Dorsolateral prefrontal cortex (tissue), 120 donors: ENCODE measurements at regions of chr1 and their contacts with region 1.

Region 1: DNA sequence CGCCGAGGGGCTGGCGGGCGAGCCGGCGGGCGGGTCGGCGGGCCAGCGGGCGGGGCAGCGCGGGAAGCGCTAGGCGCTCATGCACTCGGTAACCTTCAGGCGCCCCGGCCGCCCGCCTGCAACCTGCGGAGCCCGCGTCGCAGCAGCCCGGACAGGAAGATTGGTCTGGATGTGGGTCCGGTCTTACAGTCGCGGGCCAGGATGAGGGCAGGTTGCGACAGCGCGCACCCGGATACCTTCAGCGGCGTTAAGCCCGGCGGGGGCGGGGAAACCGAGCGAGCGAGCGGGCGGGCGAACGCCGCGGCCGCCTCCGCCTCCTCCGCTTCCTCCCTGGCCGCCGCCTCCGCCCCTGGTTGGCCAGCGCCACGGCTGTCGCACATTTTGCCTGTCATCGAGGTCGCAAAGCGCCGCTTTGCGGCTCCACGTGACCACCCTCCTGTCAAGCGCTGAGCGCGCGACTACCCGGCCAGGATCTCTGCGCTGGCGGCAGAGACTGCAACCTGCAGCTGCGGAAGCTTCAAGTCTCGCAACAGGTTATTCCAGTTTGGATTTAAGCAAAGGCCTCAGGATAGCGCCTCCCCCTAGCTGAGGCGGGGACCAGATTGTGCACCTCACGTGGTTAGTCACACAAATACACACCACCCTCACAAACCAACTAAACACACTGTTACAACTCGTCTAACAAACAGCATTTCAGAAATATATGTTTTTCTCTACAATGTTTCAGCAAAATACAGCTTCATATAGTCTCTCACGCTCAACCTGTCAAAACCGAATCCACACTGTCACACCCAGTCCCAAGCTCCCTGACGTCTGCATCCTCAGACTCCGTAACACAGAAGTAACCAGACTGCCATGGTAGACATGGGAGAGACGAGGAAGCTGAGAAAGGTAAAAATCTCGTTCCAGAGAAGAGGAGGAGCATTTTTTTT is at the start of gene FAF1:
- DNase-seq: peak; percentile 93 to 98 (median 95)
- H3K4me3 ChIP-seq: peak within 1 kb of the TSS; percentile 51 to 98 (median 80)
- H3K27ac ChIP-seq: peak within 1 kb of the TSS; percentile 18 to 97 (median 87)
- H3K27me3 ChIP-seq: no peaks in the 10 kb centered on the region
- CTCF ChIP-seq: peak in 55 of 56 donors; percentile 19 to 68 (median 47)
- total RNA-seq, gene FAF1: 61.7 to 103 (median 81.7) TPM

Region 2: GRCh38 chr1:50774759-50775351 is 185.3 kb before region 1 on chr1:
- intact Hi-C with region 1: loop called in 1 of 2 experiments (anchors 10 kb)
- DNase-seq: peak in 1 of 10 donors; percentile 26
- H3K4me3 ChIP-seq: no peak overlapping the region
- H3K27ac ChIP-seq: no peak overlapping the region
- H3K27me3 ChIP-seq: no peaks in the 10 kb centered on the region
- CTCF ChIP-seq: peak; percentile 64 to 99 (median 84)

Region 3: GRCh38 chr1:50929376-50929958 is 30.7 kb before region 1 on chr1:
- intact Hi-C with region 1: loop called in 1 of 2 experiments (anchors 2 kb)
- DNase-seq: no peak
- H3K4me3 ChIP-seq: no peak overlapping the region
- H3K27ac ChIP-seq: peak overlapping the region in 5 of 59 donors; percentile 3 to 57 (median 30)
- H3K27me3 ChIP-seq: no peaks in the 10 kb centered on the region
- CTCF ChIP-seq: peak in 55 of 56 donors; percentile 59 to 91 (median 70)

Region 4: GRCh38 chr1:51378871-51379270 is 418.7 kb after region 1 on chr1:
- intact Hi-C with region 1: no loop called
- DNase-seq: no peak
- H3K4me3 ChIP-seq: no peak overlapping the region
- H3K27ac ChIP-seq: peak overlapping the region in 4 of 59 donors; percentile 47 to 74 (median 60)
- H3K27me3 ChIP-seq: no peaks in the 10 kb centered on the region
- CTCF ChIP-seq: no peak

Region 5: DNA sequence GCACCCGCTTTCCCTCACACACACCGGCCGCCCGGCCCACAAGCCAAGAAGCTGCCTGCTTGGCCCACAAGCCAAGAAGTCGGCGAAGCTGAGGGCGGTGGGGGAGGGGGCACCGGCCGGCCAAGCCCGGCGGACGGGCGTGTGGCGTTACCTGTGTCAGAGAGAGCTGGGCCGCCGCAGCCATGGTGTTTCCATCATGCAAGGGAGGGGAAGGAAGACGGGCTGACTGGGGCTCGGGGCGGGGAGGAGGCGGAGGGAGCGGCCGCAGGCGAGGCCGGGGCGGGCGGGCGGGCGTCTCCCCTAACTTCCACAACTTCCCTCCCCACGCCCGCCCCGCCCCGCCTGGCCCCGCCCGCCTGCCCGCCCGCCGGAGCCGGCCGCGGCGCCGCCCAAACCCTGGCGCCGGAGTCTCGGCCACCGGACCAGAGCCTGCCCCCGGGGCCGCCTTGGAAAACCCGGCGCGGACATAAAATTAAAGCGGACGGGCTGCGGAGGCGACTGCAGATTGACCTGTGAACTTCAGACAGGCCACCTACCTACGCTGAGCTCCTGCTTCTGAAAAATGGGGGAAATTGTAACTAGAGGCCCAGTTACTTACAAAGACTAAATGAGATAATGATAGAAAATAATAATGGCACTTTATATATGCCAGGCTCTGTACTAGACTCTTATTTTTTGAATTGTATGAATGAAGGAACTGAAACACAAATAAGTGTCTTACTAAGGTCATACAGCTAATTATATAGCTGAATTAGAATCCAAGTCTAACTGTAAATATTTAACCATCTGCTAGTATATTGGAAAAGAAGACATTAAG is 559.1 kb after region 1 on chr1 and contains the start of gene EPS15:
- intact Hi-C with region 1: loop called in 1 of 2 experiments (anchors 10 kb)
- DNase-seq: peak; percentile 55 to 81 (median 70)
- H3K4me3 ChIP-seq: peak within 1 kb of the TSS; percentile 42 to 96 (median 76)
- H3K27ac ChIP-seq: peak within 1 kb of the TSS; percentile 58 to 99 (median 91)
- H3K27me3 ChIP-seq: no peaks in the 10 kb centered on the region
- CTCF ChIP-seq: peak in 2 of 56 donors; percentile 1 to 8
- total RNA-seq, gene EPS15: 123 to 234 (median 175) TPM